ENCODE measurements at regions of chr17 and their contacts with region 1.

Region 1: DNA sequence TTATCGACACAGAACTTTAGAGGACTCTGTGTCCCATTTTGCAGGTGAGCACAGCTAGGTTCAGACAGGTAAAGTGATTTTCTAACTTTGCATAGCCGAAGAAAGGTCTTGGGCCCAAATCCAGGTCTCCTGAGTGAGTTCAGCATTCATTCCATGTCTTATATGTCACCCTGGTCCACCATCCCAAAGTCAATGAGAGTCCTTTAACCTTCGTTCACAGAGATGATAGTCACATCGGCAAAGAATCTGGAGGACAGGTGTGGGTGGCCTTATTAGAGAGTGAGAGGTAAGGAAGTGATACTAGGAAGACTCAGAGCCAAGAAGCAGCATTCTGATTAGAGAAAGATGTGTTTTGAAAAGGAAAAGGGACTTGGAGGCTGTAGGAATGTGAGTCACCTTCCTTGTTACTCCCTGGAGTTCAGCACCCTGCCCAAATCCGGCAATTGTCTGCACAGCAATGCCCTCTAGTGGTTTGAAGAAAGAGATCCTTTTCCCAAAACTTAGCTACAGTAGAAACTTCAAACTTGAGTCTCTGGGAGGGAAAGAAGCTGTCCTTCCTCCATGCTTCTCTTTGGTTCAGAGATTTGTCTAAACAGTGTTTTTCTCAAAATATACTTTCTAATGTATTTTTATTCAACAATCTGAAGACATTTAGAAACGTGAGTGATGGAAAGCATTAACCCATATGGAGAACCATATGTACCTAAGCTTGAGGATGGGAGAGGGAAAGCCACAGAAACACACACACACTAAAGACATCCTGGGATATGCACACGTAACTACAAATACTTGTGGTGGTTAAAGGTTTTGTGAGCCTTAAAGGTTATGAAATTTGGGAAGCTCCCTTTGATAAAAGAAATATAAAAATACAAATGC is 96.4 kb upstream of the SHISA6 start:
- DNase-seq: no peak
- H3K4me3 ChIP-seq: no peak overlapping the region
- H3K27ac ChIP-seq: no peak overlapping the region
- H3K4me1 ChIP-seq: peaks cover 0 to 10% (median 5%) of the 10 kb centered on the region in 3 donors
- H3K27me3 ChIP-seq: peaks cover 0 to 3% (median 0%) of the 10 kb centered on the region in 4 donors
- CTCF ChIP-seq: peak in 5 of 6 experiments; percentile 64 to 83 (median 67)
- POLR2A ChIP-seq: no peak

Region 2: GRCh38 chr17:10881959-10882358 is 262.6 kb before region 1 on chr17:
- intact Hi-C with region 1: loop called (anchors 5 kb)
- DNase-seq: no peak
- H3K4me3 ChIP-seq: no peak overlapping the region
- H3K27ac ChIP-seq: no peak overlapping the region
- H3K4me1 ChIP-seq: no peaks in the 10 kb centered on the region
- H3K27me3 ChIP-seq: peaks cover 0 to 12% (median 0%) of the 10 kb centered on the region in 4 donors
- CTCF ChIP-seq: no peak
- POLR2A ChIP-seq: no peak

Measured in esophagus squamous epithelium (tissue), 5 donors.